SK-N-SH (cell line): ENCODE measurements at regions of chr7 and their contacts with region 1.

Region 1: DNA sequence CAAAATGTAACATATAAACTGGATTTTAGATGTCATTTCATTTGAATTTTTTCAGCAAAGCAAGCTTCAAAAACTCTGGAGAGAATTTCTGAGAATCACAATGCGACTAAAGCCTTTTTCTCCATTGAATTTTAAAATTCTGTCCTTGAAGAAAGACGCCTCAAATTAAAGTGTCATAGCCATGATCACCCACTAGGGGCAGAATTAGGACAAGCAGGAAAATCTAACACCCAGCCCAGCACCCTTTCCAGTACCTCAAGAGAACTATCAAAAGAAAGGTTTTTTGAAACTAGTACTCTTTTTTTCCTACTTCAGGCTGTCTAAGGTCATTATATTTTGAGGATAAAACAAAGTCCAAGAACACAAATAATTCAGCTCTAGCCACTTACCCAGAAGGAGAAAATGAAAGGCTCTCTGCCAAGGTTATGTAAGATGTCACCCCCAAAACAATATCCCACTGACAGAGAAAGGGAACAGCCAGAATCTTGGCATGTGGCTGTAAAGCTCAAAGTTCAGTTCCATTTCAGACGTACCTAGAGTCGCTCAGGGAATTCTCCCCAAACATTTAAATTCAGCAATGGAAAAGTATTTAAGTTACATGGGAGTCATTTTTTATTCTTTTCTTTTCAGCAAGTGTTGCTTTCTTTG is 299.4 kb downstream of the SNX13 start:
- DNase-seq: peak; percentile 34
- H3K4me3 ChIP-seq: no peak overlapping the region; a peak in 1 of 4 replicates
- H3K27ac ChIP-seq: no peak overlapping the region
- H3K4me1 ChIP-seq: no peaks in the 10 kb centered on the region
- H3K27me3 ChIP-seq: no peaks in the 10 kb centered on the region
- CTCF ChIP-seq: peak; percentile 88
- EP300 ChIP-seq: no peak
- RAD21 ChIP-seq: peak; percentile 45

Region 2: DNA sequence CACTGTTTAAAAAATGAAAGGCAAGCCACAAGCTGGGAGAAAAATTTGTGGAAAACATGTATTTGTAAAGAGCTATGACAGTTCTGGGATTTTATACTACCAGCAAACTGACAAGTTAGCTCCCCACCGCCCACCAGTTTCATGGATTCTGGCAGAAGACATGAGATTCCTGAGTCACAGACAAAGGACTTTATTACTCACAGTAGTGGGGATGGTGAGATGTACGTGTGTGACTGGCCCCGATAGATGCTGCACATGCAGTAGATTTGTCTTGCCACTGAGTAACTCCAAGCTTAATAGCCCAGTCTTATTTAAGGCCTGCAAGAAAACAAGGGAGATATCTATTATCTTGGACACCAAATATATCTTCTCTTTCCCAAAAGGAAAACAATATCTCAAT is 60.7 kb before region 1 on chr7:
- CTCF ChIA-PET with region 1: no interaction called
- POLR2A ChIA-PET with region 1: no interaction called
- DNase-seq: no peak
- H3K4me3 ChIP-seq: no peak overlapping the region
- H3K27ac ChIP-seq: no peak overlapping the region
- H3K4me1 ChIP-seq: no peaks in the 10 kb centered on the region
- H3K27me3 ChIP-seq: no peaks in the 10 kb centered on the region
- CTCF ChIP-seq: no peak
- EP300 ChIP-seq: no peak
- RAD21 ChIP-seq: no peak

Region 3: GRCh38 chr7:17625043-17625442 is 15.8 kb before region 1 on chr7:
- CTCF ChIA-PET with region 1: interaction called, 11 read pairs
- POLR2A ChIA-PET with region 1: no interaction called
- DNase-seq: no peak
- H3K4me3 ChIP-seq: no peak overlapping the region
- H3K27ac ChIP-seq: peak overlapping the region in 1 of 2 experiments; percentile 16; a peak in 2 of 4 replicates
- H3K4me1 ChIP-seq: no peaks in the 10 kb centered on the region; a peak in 1 of 4 replicates
- H3K27me3 ChIP-seq: no peaks in the 10 kb centered on the region
- CTCF ChIP-seq: no peak
- EP300 ChIP-seq: no peak
- RAD21 ChIP-seq: no peak

Region 4: DNA sequence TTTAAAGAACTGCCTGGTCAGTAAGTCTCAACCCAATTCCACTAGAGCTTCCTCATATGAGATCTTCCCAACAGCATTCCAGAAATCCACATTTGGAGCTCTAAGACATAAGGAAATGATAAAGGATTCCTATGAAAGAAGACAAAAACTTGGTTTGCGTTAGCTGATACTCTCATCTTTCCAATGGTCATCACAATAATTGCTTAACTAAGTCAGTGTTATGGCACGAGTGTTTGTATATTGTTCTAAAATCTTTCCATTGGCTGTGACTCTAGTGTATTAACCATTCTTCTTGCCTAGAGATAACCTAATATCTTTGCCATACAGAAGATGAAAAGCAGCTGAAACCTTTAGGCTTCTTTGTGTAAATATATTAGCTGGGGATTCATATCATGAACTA is 10.5 kb after region 1 on chr7:
- CTCF ChIA-PET with region 1: interaction called, 10 read pairs
- POLR2A ChIA-PET with region 1: no interaction called
- DNase-seq: no peak
- H3K4me3 ChIP-seq: no peak overlapping the region
- H3K27ac ChIP-seq: peak overlapping the region; percentile 49 to 54; a peak in 3 of 4 replicates
- H3K4me1 ChIP-seq: peaks cover 0 to 7% of the 10 kb centered on the region in 2 experiments; a peak in 1 of 4 replicates
- H3K27me3 ChIP-seq: no peaks in the 10 kb centered on the region; the same call in 1 of the 2 replicates
- CTCF ChIP-seq: no peak
- EP300 ChIP-seq: no peak
- RAD21 ChIP-seq: no peak

Region 5: DNA sequence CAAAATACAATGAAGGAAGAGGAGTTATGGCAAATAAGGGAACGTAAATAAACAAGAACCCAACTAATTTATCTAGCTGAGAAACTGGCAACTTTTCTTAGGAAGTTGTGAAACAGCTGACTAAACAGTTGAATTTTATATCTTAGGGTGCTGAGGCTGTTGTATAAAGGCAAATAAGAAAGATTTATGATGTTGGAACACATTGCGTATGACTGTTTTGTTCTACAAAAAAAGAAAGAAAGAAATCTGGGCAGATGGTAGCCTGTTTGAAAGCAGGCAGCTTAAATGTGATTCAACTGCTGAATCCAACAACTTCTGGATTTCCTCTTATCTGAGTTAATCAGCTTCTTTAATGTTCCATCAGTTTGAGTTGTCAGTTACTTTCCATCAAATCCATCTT is 84.9 kb after region 1 on chr7:
- CTCF ChIA-PET with region 1: no interaction called
- POLR2A ChIA-PET with region 1: no interaction called
- DNase-seq: no peak
- H3K4me3 ChIP-seq: no peak overlapping the region
- H3K27ac ChIP-seq: no peak overlapping the region
- H3K4me1 ChIP-seq: no peaks in the 10 kb centered on the region
- H3K27me3 ChIP-seq: peaks cover 37% of the 10 kb centered on the region; the same call in 1 of the 2 replicates
- CTCF ChIP-seq: no peak
- EP300 ChIP-seq: no peak
- RAD21 ChIP-seq: no peak